ENCODE measurements at regions of chr4 and their contacts with region 1.

Region 1: DNA sequence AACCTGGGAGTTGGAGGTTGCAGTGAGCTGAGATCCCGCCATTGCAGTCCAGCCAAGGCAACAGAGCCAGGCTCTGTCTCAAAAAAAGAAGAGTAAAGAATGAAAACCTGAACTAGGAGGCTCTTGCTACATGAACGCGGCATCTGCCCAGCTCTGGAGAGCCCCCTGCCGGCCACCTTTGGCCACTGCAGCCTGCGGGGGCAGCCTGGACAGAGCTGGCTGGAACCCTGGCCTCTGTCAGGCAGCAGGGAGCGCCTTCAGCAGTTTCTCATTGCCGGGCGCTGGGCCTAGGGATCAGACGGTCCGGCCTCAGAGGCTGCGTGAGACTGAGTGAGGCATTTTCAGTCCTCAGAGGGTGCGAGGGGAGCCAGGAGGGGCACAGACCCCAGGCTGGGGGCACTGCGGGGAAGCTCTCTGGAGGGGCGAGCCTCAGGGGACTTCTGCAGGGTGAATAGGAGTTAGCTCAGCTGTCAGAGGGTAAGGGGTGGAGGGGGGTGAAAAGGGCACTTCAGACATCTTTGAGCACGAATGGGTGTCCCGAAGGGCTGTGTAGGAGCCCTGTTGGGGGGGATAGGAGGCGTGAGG is 17.5 kb downstream of the DOK7 start:
- DNase-seq: peak; percentile 83
- ATAC-seq: peak; percentile 96
- H3K4me3 Mint-ChIP-seq: no peak overlapping the region
- H3K27ac Mint-ChIP-seq: no peak overlapping the region
- H3K4me1 Mint-ChIP-seq: peaks cover 3% of the 10 kb centered on the region
- H3K27me3 Mint-ChIP-seq: peaks cover 5% of the 10 kb centered on the region
- CTCF ChIP-seq: peak; percentile 99

Region 2: GRCh38 chr4:3212786-3213425 is 267.7 kb before region 1 on chr4:
- CTCF ChIA-PET with region 1: interaction called, 10 read pairs
- POLR2A ChIA-PET with region 1: no interaction called
- intact Hi-C with region 1: no loop called
- DNase-seq: no peak
- ATAC-seq: no peak
- H3K4me3 Mint-ChIP-seq: no peak overlapping the region
- H3K27ac Mint-ChIP-seq: no peak overlapping the region
- H3K4me1 Mint-ChIP-seq: no peaks in the 10 kb centered on the region
- H3K27me3 Mint-ChIP-seq: no peaks in the 10 kb centered on the region
- CTCF ChIP-seq: no peak

Region 3: GRCh38 chr4:3346146-3346545 is 134.5 kb before region 1 on chr4:
- CTCF ChIA-PET with region 1: interaction called, 24 read pairs
- POLR2A ChIA-PET with region 1: no interaction called
- intact Hi-C with region 1: no loop called
- DNase-seq: peak; percentile 57
- ATAC-seq: peak; percentile 85
- H3K4me3 Mint-ChIP-seq: no peak overlapping the region
- H3K27ac Mint-ChIP-seq: no peak overlapping the region
- H3K4me1 Mint-ChIP-seq: peaks cover 21% of the 10 kb centered on the region
- H3K27me3 Mint-ChIP-seq: no peaks in the 10 kb centered on the region
- CTCF ChIP-seq: peak; percentile 79

Region 4: DNA sequence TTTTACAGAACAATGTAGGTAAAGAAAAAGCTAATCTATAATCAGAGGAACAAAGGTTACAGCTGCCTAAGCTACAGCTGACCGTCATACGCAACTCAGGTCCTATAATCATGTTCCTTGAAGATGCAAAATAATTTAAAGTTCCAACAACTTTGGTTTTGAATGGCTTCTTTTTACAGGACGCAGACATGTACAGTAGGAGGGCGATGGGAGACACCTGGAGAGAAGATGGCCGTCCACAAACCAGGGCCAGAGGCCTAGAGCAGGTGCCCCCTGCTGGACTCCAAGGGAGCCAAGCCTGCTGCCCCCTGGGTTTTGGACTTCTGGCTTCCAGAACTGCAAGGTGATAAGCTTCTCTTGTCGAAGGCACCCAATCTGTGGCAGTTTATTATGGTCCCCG is 28.2 kb before region 1 on chr4:
- CTCF ChIA-PET with region 1: interaction called, 14 read pairs
- POLR2A ChIA-PET with region 1: no interaction called
- intact Hi-C with region 1: no loop called
- DNase-seq: no peak
- ATAC-seq: no peak
- H3K4me3 Mint-ChIP-seq: no peak overlapping the region
- H3K27ac Mint-ChIP-seq: no peak overlapping the region
- H3K4me1 Mint-ChIP-seq: no peaks in the 10 kb centered on the region
- H3K27me3 Mint-ChIP-seq: no peaks in the 10 kb centered on the region
- CTCF ChIP-seq: no peak

Region 5: GRCh38 chr4:3470244-3471097 is 10.1 kb before region 1 on chr4:
- CTCF ChIA-PET with region 1: interaction called, 11 read pairs
- POLR2A ChIA-PET with region 1: no interaction called
- intact Hi-C with region 1: no loop called
- DNase-seq: no peak
- ATAC-seq: no peak
- H3K4me3 Mint-ChIP-seq: no peak overlapping the region
- H3K27ac Mint-ChIP-seq: no peak overlapping the region
- H3K4me1 Mint-ChIP-seq: no peaks in the 10 kb centered on the region
- H3K27me3 Mint-ChIP-seq: peaks cover 1% of the 10 kb centered on the region
- CTCF ChIP-seq: no peak

Region 6: GRCh38 chr4:3505231-3505630 is 24.6 kb after region 1 on chr4:
- CTCF ChIA-PET with region 1: interaction called, 10 read pairs
- POLR2A ChIA-PET with region 1: no interaction called
- intact Hi-C with region 1: no loop called
- DNase-seq: no peak
- ATAC-seq: no peak
- H3K4me3 Mint-ChIP-seq: no peak overlapping the region
- H3K27ac Mint-ChIP-seq: no peak overlapping the region
- H3K4me1 Mint-ChIP-seq: peaks cover 4% of the 10 kb centered on the region
- H3K27me3 Mint-ChIP-seq: no peaks in the 10 kb centered on the region
- CTCF ChIP-seq: no peak

Region 7: DNA sequence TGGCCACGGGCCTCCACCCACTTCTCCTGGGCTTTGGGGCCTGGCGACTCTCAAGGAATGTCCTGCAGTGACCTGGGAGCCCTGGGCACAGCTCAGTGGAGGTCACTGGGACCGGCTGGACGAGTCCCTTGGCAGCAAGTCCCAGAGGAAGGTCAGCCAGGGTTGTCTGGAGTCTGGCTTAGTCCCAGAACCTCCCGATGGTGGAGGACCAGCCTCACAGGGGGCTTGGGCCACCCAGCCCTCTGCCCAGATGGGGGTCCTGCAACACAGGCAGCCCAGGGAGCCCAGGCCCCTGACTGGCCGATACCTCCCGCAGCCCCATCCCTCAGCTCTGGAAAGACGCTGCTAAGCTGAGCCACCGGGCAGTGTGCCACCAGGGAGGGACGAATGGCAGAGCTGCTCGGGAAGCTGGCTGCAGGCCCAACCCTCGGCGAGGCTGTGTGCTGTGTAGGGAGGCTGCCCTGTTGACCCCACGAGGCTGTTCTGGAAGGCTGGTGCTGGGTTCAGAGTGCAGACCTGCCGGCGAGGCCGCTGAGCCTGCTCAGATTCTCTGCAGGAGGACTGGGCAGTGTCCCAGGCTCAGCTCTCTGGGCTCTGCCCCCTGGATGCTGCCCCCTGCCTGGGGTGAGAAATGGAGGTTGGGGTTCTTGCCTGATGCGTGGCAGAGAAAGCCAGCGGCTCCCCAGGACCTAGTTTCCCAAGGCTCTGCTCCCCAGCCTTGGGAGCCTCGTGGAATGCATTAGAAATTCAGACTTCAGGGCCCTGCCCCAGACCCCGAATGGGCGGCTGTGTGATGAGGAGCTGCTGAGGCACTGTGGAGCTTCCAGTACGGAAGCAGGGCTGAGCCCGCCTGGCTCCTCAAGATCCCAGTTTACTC is 347.2 kb after region 1 on chr4:
- CTCF ChIA-PET with region 1: no interaction called
- POLR2A ChIA-PET with region 1: no interaction called
- intact Hi-C with region 1: no loop called
- DNase-seq: no peak
- ATAC-seq: no peak
- H3K4me3 Mint-ChIP-seq: no peak overlapping the region
- H3K27ac Mint-ChIP-seq: no peak overlapping the region
- H3K4me1 Mint-ChIP-seq: no peaks in the 10 kb centered on the region
- H3K27me3 Mint-ChIP-seq: no peaks in the 10 kb centered on the region
- CTCF ChIP-seq: no peak